PC-9 (cell line): ENCODE measurements at regions of chr1 and their contacts with region 1.

Region 1: GRCh38 chr1:205961405-205961804 is 18.1 kb upstream of the SLC26A9 start:
- DNase-seq: peak in 1 of 2 experiments; percentile 39
- H3K4me3 ChIP-seq: no peak overlapping the region
- H3K27ac ChIP-seq: peak overlapping the region; percentile 97
- H3K4me1 ChIP-seq: peaks cover 65% of the 10 kb centered on the region
- H3K27me3 ChIP-seq: no peaks in the 10 kb centered on the region
- CTCF ChIP-seq: no peak

Region 2: DNA sequence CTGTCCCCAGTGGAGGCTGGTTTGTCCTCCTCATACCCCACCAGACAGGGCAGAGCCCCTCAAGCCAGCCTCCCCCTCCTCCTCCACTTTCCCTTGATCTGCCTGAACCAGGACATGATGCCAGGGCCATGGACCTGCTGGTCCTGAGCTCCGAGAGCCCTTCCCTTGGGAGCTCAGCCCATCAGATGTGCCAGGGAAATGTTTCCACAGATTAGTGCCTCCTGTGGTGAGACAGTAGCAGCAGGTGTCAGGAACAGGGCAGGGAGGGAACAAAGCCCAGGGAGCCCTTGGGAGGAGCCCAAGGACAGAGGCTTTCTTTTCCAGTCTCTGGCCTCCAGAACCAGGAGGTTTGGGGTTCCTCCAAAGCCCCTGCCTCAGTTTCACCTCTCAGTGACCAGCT is 133.8 kb before region 1 on chr1:
- CTCF ChIA-PET with region 1: no interaction called
- POLR2A ChIA-PET with region 1: no interaction called
- intact Hi-C with region 1: no loop called
- DNase-seq: no peak
- H3K4me3 ChIP-seq: no peak overlapping the region
- H3K27ac ChIP-seq: no peak overlapping the region
- H3K4me1 ChIP-seq: no peaks in the 10 kb centered on the region
- H3K27me3 ChIP-seq: no peaks in the 10 kb centered on the region
- CTCF ChIP-seq: no peak

Region 3: GRCh38 chr1:205933671-205934618 is 27.5 kb before region 1 on chr1:
- CTCF ChIA-PET with region 1: no interaction called
- POLR2A ChIA-PET with region 1: no interaction called
- intact Hi-C with region 1: loop called (anchors 1 kb)
- DNase-seq: peak; percentile 74 to 99
- H3K4me3 ChIP-seq: peak overlapping the region; percentile 4; the same call in 1 of the 2 replicates
- H3K27ac ChIP-seq: peak overlapping the region; percentile 99
- H3K4me1 ChIP-seq: peaks cover 75% of the 10 kb centered on the region
- H3K27me3 ChIP-seq: no peaks in the 10 kb centered on the region
- CTCF ChIP-seq: no peak